Brain microvascular endothelial cell (primary cell): ENCODE measurements at regions of chr13 and their contacts with region 1.

Region 1: DNA sequence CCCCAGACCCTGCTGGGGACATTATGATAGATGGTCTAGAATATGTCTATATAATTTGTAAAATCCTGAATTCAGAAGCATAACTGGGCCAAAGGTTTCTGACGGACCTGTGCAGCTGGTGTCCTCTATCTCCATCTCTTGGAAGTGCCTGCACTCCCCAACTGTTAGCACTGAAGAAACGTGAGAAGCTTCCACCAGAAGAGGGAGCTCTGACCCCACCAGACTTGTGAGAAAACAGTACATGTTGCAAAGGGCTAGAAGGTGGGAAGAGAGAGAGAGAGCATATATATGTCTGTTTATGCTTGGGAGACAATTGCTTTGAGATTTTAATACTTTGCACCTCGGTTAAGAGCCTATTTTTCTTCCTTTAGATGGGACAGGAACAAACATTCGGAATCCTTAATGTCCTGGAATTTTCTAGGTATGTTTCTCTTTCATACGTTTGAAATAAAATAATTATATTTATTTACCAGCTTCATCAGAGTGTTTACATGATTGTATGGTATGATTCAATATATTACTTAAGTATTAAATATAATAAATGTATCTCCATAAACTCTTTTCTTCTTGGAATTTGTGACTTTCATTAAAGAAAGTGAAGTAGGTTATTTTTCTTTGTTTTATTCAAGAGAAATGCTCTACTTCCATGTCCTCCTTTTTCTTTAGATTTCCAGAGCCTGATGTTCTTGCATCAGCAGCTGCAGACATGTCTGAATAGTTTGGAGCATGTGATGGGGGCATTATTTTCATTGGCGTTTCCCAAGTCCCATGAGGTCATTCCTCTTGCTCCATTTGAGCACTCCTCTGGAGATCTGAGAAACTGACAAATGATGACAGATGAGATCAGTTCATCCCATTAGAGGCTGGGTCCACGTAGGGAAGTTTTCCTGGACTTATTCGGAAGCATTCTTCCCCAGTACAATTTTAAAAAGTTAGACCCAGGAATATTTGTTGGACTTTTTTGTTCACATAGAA is 202.9 kb downstream of the ATP8A2 start:
- DNase-seq: peak; percentile 89
- H3K4me3 ChIP-seq: no peak overlapping the region
- H3K27ac ChIP-seq: no peak overlapping the region
- H3K27me3 ChIP-seq: no peaks in the 10 kb centered on the region
- CTCF ChIP-seq: peak; percentile 98

Region 2: DNA sequence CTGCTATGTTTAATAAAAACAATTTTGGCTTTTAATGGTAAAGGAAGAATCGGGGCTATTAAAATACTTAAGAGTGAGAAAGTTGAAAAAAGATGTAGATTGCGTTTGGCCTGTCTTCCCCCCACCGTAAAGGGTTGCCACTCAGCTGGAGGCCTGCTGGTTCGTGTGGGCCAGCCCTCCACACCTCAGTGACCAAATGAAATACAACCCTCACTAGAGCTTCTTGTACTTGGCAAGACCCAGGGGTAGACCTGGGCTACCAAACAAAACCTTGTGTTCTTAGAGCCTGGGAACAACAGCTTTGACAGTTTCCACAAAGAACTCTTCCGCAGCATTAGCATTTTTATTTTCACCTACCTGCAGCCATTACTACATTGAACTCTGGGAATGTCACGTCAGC is 631.6 kb before region 1 on chr13:
- in situ Hi-C with region 1: no loop called
- DNase-seq: no peak
- H3K4me3 ChIP-seq: no peak overlapping the region
- H3K27ac ChIP-seq: no peak overlapping the region
- H3K27me3 ChIP-seq: no peaks in the 10 kb centered on the region
- CTCF ChIP-seq: no peak

Region 3: GRCh38 chr13:26062844-26063444 is 488.2 kb after region 1 on chr13:
- in situ Hi-C with region 1: loop called (anchors 25 kb)
- DNase-seq: peak; percentile 63
- H3K4me3 ChIP-seq: no peak overlapping the region
- H3K27ac ChIP-seq: no peak overlapping the region
- H3K27me3 ChIP-seq: no peaks in the 10 kb centered on the region
- CTCF ChIP-seq: peak; percentile 83